Colonic mucosa (tissue), 4 donors: ENCODE measurements at regions of chr16 and their contacts with region 1.

Region 1: GRCh38 chr16:3443108-3444031 is at the starts of genes NAA60 and ZNF597:
- DNase-seq: peak; percentile 87
- H3K4me3 ChIP-seq: peak within 1 kb of the TSS; percentile 63
- H3K27ac ChIP-seq: peak within 1 kb of the TSS; percentile 42
- H3K4me1 ChIP-seq: no peaks in the 10 kb centered on the region
- H3K27me3 ChIP-seq: no peaks in the 10 kb centered on the region
- CTCF ChIP-seq: no peak
- total RNA-seq, gene NAA60: 56.8 to 68.6 TPM
- total RNA-seq, gene ZNF597: 1.4 to 1.7 TPM

Region 2: DNA sequence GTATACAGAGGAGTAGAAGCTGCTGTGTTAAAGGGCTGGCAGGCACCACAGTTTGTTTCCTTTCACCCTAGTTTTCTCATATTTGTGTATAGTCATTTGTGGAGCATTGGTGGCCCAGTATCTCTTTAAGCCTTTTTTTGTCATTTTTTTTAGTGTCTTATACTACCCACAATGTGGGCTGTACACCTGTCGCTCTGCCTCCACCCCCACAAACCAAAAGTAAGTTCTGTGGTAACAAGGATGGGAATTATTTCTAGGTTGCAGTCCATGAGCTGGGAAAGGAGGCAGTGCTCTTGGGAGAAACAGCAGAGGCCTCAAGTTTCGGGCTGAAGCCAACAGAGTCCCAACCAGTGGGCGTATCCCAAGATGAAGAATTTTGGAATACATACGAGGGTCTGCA is 131.9 kb before region 1 on chr16:
- intact Hi-C with region 1: no loop called
- DNase-seq: no peak
- H3K4me3 ChIP-seq: no peak overlapping the region
- H3K27ac ChIP-seq: no peak overlapping the region
- H3K4me1 ChIP-seq: no peaks in the 10 kb centered on the region
- H3K27me3 ChIP-seq: no peaks in the 10 kb centered on the region
- CTCF ChIP-seq: no peak

Region 3: GRCh38 chr16:3389663-3390338 is 53.6 kb before region 1 on chr16:
- intact Hi-C with region 1: no loop called
- DNase-seq: no peak
- H3K4me3 ChIP-seq: no peak overlapping the region
- H3K27ac ChIP-seq: no peak overlapping the region
- H3K4me1 ChIP-seq: no peaks in the 10 kb centered on the region
- H3K27me3 ChIP-seq: no peaks in the 10 kb centered on the region
- CTCF ChIP-seq: no peak

Region 4: GRCh38 chr16:3400779-3401688 is 42.3 kb before region 1 on chr16 and contains the starts of genes ZNF174 and ZSCAN32:
- intact Hi-C with region 1: no loop called
- DNase-seq: peak; percentile 99
- H3K4me3 ChIP-seq: peak within 1 kb of the TSS; percentile 90
- H3K27ac ChIP-seq: peak within 1 kb of the TSS; percentile 82
- H3K4me1 ChIP-seq: no peaks in the 10 kb centered on the region
- H3K27me3 ChIP-seq: no peaks in the 10 kb centered on the region
- CTCF ChIP-seq: no peak
- total RNA-seq, gene ZNF174: 6.7 to 6.8 TPM
- total RNA-seq, gene ZSCAN32: 7.2 to 7.5 TPM

Region 5: GRCh38 chr16:3490911-3491629 is 47.7 kb after region 1 on chr16:
- intact Hi-C with region 1: loop called (anchors 10 kb)
- DNase-seq: no peak
- H3K4me3 ChIP-seq: no peak overlapping the region
- H3K27ac ChIP-seq: no peak overlapping the region
- H3K4me1 ChIP-seq: no peaks in the 10 kb centered on the region
- H3K27me3 ChIP-seq: no peaks in the 10 kb centered on the region
- CTCF ChIP-seq: no peak

Region 6: DNA sequence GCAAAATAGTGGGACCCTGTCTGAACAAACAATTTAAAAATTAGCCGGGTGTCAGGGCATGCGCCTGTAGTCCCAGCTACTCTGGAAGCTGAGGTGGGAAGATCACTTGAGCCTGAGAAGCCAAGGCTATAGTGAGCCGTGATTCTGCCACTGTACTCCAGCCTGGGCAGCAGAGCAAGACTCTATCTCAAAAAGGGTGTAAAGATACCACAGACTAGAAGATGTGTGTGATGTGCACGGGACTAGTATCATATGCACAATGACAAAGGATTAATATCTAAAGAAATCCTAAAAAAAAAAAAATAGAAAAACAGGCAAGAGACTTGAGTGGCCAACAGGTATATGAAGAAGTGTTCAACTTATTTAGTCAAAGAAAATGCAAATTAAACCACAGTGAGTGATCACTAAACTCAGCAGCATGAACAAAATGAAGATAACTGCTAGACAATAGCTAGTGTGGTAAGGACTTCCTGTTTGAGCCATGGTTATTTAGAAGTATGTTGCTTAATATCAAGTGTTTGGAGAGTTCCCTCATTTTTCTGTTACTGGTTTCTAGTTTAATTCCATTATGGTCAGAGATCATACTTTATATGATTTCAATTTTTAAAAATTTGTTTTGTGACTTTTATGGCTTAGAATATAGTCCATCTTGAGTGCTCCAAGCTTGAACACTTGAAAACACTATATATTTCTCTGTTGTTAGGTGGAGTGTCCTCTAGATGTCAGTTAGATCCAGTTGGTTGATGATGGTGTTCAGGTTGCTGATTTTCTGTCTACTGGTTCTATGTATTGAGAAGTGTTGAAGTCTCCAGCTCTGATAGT is 182.8 kb after region 1 on chr16:
- intact Hi-C with region 1: no loop called
- DNase-seq: no peak
- H3K4me3 ChIP-seq: no peak overlapping the region
- H3K27ac ChIP-seq: no peak overlapping the region
- H3K4me1 ChIP-seq: no peaks in the 10 kb centered on the region
- H3K27me3 ChIP-seq: no peaks in the 10 kb centered on the region
- CTCF ChIP-seq: no peak